ENCODE measurements at regions of chr17 and their contacts with region 1.

Region 1: GRCh38 chr17:68972119-68972704 is 17.0 kb upstream of the ABCA8 start:
- DNase-seq: peak; percentile 64
- H3K4me3 ChIP-seq: no peak overlapping the region
- H3K27ac ChIP-seq: no peak overlapping the region
- H3K4me1 ChIP-seq: no peaks in the 10 kb centered on the region
- H3K27me3 ChIP-seq: no peaks in the 10 kb centered on the region
- CTCF ChIP-seq: peak; percentile 50 to 58
- POLR2A ChIP-seq: no peak

Region 2: GRCh38 chr17:68658999-68659780 is 313.0 kb before region 1 on chr17:
- CTCF ChIA-PET with region 1: no interaction called
- POLR2A ChIA-PET with region 1: no interaction called
- dilution Hi-C with region 1: no loop called
- intact Hi-C with region 1: no loop called
- DNase-seq: no peak
- H3K4me3 ChIP-seq: no peak overlapping the region
- H3K27ac ChIP-seq: no peak overlapping the region
- H3K4me1 ChIP-seq: no peaks in the 10 kb centered on the region
- H3K27me3 ChIP-seq: peaks cover 2 to 4% of the 10 kb centered on the region in 2 experiments
- CTCF ChIP-seq: no peak
- POLR2A ChIP-seq: no peak

Region 3: DNA sequence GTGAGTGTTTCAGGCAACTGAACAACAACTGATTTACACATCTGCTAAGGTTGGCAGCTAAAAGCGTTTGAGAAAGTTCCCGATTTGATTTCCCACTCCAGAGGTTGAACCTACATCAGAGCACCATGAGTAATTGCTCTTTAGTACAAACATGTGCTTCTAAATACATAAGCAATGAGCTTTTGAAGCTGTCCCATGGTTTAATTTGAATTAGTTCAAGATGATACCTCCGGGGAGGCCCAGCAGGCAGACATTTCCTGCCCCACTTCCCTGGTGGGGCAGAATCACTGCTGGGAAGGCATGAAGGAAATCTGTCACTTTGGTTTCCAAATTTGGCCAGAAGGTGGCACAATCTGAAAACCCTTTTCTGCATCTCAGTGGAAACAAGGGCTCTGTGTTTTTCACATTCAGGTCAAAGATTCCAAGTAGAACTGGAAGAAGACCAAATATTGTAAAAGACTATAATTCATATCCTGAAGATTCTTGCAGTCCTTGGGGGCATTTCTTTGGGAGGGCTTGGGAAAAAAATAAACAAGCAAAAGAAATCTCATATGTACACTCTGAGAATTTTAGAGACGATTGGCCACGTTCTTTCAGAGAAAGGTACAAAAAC is 194.9 kb before region 1 on chr17:
- CTCF ChIA-PET with region 1: interaction called, 16 read pairs
- POLR2A ChIA-PET with region 1: no interaction called
- dilution Hi-C with region 1: no loop called
- intact Hi-C with region 1: loop called (anchors 1 kb)
- DNase-seq: peak; percentile 90
- H3K4me3 ChIP-seq: no peak overlapping the region
- H3K27ac ChIP-seq: peak overlapping the region; percentile 44
- H3K4me1 ChIP-seq: peaks cover 36% of the 10 kb centered on the region
- H3K27me3 ChIP-seq: no peaks in the 10 kb centered on the region
- CTCF ChIP-seq: peak; percentile 63
- POLR2A ChIP-seq: no peak